Activated CD8-positive, alpha-beta T cell treated with anti-CD3 and anti-CD28 coated beads for 36 hours (primary cell): ENCODE measurements at regions of chr1 and their contacts with region 1.

Region 1: GRCh38 chr1:150535511-150536281 is 13.5 kb upstream of the ADAMTSL4 start:
- DNase-seq: no peak
- ATAC-seq: no peak
- H3K4me3 Mint-ChIP-seq: no peak overlapping the region
- H3K27ac Mint-ChIP-seq: no peak overlapping the region
- H3K4me1 Mint-ChIP-seq: no peaks in the 10 kb centered on the region
- H3K27me3 Mint-ChIP-seq: no peaks in the 10 kb centered on the region
- CTCF ChIP-seq: no peak

Region 2: DNA sequence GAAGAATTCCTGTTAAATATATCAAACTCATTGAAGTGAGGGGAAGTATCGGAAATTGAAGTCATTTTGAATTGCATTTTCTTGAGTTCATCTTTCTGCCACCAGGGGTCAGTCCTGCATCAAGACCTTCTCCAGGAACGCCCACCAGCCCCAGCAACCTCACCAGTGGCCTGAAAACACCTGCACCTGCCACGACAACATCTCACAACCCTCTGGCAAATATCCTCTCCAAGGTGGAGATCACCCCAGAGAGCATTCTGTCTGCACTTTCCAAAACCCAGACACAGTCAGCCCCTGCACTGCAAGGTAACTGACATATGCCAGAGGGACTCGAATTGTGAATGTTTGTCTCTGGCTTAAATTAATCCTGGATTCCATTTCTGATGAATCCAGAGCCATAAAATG is 71.3 kb before region 1 on chr1:
- CTCF ChIA-PET with region 1: interaction called, 10 read pairs
- POLR2A ChIA-PET with region 1: no interaction called
- intact Hi-C with region 1: no loop called
- DNase-seq: peak; percentile 87
- ATAC-seq: peak; percentile 85
- H3K4me3 Mint-ChIP-seq: no peak overlapping the region
- H3K27ac Mint-ChIP-seq: no peak overlapping the region
- H3K4me1 Mint-ChIP-seq: peaks cover 4% of the 10 kb centered on the region
- H3K27me3 Mint-ChIP-seq: no peaks in the 10 kb centered on the region
- CTCF ChIP-seq: peak; percentile 86

Region 3: GRCh38 chr1:150515328-150516048 is 20.2 kb before region 1 on chr1 and contains the start of gene FALEC:
- CTCF ChIA-PET with region 1: interaction called, 30 read pairs
- POLR2A ChIA-PET with region 1: interaction called, 3 read pairs
- intact Hi-C with region 1: no loop called
- DNase-seq: peak; percentile 92
- ATAC-seq: peak; percentile 100
- H3K4me3 Mint-ChIP-seq: peak within 1 kb of the TSS; percentile 92
- H3K27ac Mint-ChIP-seq: peak within 1 kb of the TSS; percentile 64
- H3K4me1 Mint-ChIP-seq: peaks cover 12% of the 10 kb centered on the region
- H3K27me3 Mint-ChIP-seq: no peaks in the 10 kb centered on the region
- CTCF ChIP-seq: no peak
- total RNA-seq, gene FALEC: not detected

Region 4: GRCh38 chr1:150521196-150521968 is 14.3 kb before region 1 on chr1:
- CTCF ChIA-PET with region 1: interaction called, 30 read pairs
- POLR2A ChIA-PET with region 1: interaction called, 3 read pairs
- intact Hi-C with region 1: no loop called
- DNase-seq: no peak
- ATAC-seq: no peak
- H3K4me3 Mint-ChIP-seq: no peak overlapping the region
- H3K27ac Mint-ChIP-seq: no peak overlapping the region
- H3K4me1 Mint-ChIP-seq: peaks cover 5% of the 10 kb centered on the region
- H3K27me3 Mint-ChIP-seq: no peaks in the 10 kb centered on the region
- CTCF ChIP-seq: no peak

Region 5: GRCh38 chr1:150548632-150549495 is 13.2 kb after region 1 on chr1 and contains the start of gene ADAMTSL4:
- CTCF ChIA-PET with region 1: interaction called, 21 read pairs
- POLR2A ChIA-PET with region 1: interaction called, 3 read pairs
- intact Hi-C with region 1: no loop called
- DNase-seq: peak; percentile 49
- ATAC-seq: peak; percentile 79
- H3K4me3 Mint-ChIP-seq: peak within 1 kb of the TSS; percentile 71
- H3K27ac Mint-ChIP-seq: peak within 1 kb of the TSS; percentile 38
- H3K4me1 Mint-ChIP-seq: peaks cover 29% of the 10 kb centered on the region
- H3K27me3 Mint-ChIP-seq: peaks cover 23% of the 10 kb centered on the region
- CTCF ChIP-seq: no peak
- total RNA-seq, gene ADAMTSL4: 0.11 to 0.20 TPM